ENCODE measurements at regions of chr7 and their contacts with region 1.

Region 1: GRCh38 chr7:95608359-95609173 is 12.2 kb upstream of the PDK4 start:
- DNase-seq: peak; percentile 93
- ATAC-seq: peak; percentile 99

Region 2: GRCh38 chr7:95596198-95597063 is 12.1 kb before region 1 on chr7 and contains the start of gene PDK4:
- intact Hi-C with region 1: loop called in 1 of 2 experiments (anchors 2 kb)
- DNase-seq: peak; percentile 96
- ATAC-seq: peak; percentile 96 to 98
- total RNA-seq, gene PDK4: 129 to 528 TPM

Region 3: GRCh38 chr7:95628831-95629439 is 20.4 kb after region 1 on chr7:
- intact Hi-C with region 1: loop called in 1 of 2 experiments (anchors 1 kb)
- DNase-seq: peak; percentile 24
- ATAC-seq: peak; percentile 43 to 63

Region 4: GRCh38 chr7:96238474-96238873 is 629.9 kb after region 1 on chr7:
- intact Hi-C with region 1: no loop called
- DNase-seq: no peak
- ATAC-seq: no peak

Measured in left cardiac atrium (tissue), 4 donors.